ENCODE measurements at regions of chr16 and their contacts with region 1.

Region 1: DNA sequence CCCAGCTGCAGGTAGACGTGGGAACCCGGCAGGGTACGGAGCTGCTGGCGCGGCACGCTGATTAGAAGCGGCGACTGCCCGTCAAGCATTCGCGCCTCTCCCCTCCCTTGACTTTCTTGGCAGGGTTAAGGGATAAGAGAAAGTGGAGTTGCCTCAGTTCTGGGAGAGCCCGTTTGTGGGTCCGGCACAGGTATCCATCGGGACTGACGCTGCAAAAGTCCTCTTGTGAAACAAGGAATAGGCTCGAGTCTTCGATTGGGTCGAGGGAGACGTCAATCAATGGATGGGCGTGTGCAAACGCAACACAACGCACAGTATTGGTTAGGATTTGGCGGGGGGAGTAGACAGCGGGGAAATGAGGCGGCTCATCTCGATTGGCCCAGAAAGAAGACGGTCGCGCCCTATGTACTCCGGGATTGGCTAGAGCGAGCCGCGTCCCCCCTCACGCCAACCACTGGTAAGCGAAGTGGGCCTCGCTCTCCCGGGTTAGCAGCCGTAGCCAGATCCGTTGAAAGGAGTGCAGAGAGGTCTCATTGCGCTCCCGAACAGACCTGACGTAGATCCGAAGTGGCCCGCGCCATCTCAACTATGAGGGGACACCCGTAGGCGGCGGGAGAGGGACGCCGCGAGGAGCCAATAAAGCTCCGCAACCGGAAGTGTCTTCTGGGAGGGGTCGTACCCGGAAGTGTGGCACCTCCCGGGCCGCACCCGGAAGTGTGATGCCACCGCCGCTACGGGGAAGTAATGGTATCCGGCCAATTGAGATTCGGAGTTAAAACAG is at the start of gene MON1B:
- DNase-seq: peak; percentile 98
- ATAC-seq: peak; percentile 97
- H3K4me3 ChIP-seq: peak within 1 kb of the TSS; percentile 86 to 97
- H3K27ac ChIP-seq: peak within 1 kb of the TSS; percentile 95
- H3K4me1 ChIP-seq: peaks cover 4 to 13% of the 10 kb centered on the region in 2 experiments; a peak in 3 of 4 replicates
- H3K27me3 ChIP-seq: no peaks in the 10 kb centered on the region
- CTCF ChIP-seq: no peak
- POLR2A ChIP-seq: no peak
- RAD21 ChIP-seq: no peak
- total RNA-seq, gene MON1B: 34.7 TPM

Region 2: GRCh38 chr16:77211880-77212740 is 21.4 kb after region 1 on chr16:
- CTCF ChIA-PET with region 1: no interaction called
- POLR2A ChIA-PET with region 1: no interaction called
- RAD21 ChIA-PET with region 1: no interaction called
- intact Hi-C with region 1: loop called (anchors 2 kb)
- DNase-seq: no peak
- ATAC-seq: peak; percentile 59
- H3K4me3 ChIP-seq: peak overlapping the region; percentile 69 to 83
- H3K27ac ChIP-seq: peak overlapping the region; percentile 89
- H3K4me1 ChIP-seq: peaks cover 41 to 58% of the 10 kb centered on the region in 2 experiments
- H3K27me3 ChIP-seq: no peaks in the 10 kb centered on the region
- CTCF ChIP-seq: no peak
- POLR2A ChIP-seq: peak; percentile 53
- RAD21 ChIP-seq: no peak

Measured in HCT116 (cell line).